Mammary epithelial cell (primary cell): ENCODE measurements at regions of chr2 and their contacts with region 1.

Region 1: GRCh38 chr2:176096986-176097819 is 2.4 kb upstream of the HOXD12 start:
- DNase-seq: peak; percentile 37
- H3K4me3 ChIP-seq: peak overlapping the region in 2 of 3 experiments; percentile 8 to 42
- H3K27ac ChIP-seq: no peak overlapping the region
- H3K4me1 ChIP-seq: peaks cover 8% of the 10 kb centered on the region
- H3K27me3 ChIP-seq: peaks cover 90% of the 10 kb centered on the region
- CTCF ChIP-seq: peak; percentile 72 to 90

Region 2: DNA sequence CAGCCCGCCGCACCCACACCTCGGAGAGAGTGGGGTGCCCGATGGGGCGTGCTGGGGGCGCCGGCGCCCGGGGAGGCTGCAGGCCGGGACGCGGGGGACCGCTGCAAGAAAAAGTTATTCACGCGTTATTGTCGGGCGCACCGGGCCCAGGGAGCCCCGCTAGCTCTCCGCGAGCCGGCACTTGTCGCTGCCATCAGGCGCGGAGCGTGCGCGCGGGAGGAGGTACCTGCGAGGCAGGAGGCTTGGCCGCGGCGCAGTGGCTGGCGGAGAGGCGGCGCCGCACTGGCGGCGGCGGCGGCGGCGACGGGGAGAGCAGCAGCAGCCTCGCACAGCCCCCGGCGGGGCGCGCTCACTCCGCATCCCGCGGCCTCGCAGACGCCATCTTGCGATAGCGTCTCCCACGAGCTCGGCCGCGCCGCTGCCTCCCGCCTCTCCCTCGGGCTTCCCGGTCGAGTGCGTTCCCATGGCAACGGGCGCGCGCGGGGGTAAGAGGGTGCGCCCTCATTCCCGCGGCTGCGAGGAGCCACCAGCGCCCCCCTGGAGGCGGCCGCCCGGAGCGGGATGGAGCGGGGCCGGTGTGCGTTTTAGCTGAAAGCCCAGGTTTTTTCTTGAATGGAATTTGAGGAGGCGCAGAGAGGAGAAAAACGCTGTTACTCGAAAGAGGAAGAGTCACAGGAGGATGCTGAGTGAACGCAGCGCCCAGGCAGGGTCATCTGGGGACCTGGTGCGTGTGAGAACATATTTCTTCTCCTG is 1092.0 kb before region 1 on chr2 and contains the start of gene CHN1:
- CTCF ChIA-PET with region 1: interaction called, 5 read pairs
- dilution Hi-C with region 1: no loop called
- in situ Hi-C with region 1: no loop called
- intact Hi-C with region 1: loop called (anchors 10 kb)
- DNase-seq: peak; percentile 59
- H3K4me3 ChIP-seq: peak within 1 kb of the TSS; percentile 64 to 77 (median 66)
- H3K27ac ChIP-seq: no peak within 1 kb of the TSS
- H3K4me1 ChIP-seq: peaks cover 4% of the 10 kb centered on the region
- H3K27me3 ChIP-seq: peaks cover 6% of the 10 kb centered on the region
- CTCF ChIP-seq: peak in 1 of 2 donors; percentile 3
- total RNA-seq, gene CHN1: 2.3 to 4.5 TPM

Region 3: GRCh38 chr2:175111200-175111657 is 986.0 kb before region 1 on chr2:
- CTCF ChIA-PET with region 1: no interaction called
- dilution Hi-C with region 1: no loop called
- in situ Hi-C with region 1: no loop called
- intact Hi-C with region 1: loop called (anchors 5 kb)
- DNase-seq: peak; percentile 34
- H3K4me3 ChIP-seq: no peak overlapping the region
- H3K27ac ChIP-seq: no peak overlapping the region
- H3K4me1 ChIP-seq: no peaks in the 10 kb centered on the region
- H3K27me3 ChIP-seq: no peaks in the 10 kb centered on the region
- CTCF ChIP-seq: peak; percentile 58 to 65

Region 4: DNA sequence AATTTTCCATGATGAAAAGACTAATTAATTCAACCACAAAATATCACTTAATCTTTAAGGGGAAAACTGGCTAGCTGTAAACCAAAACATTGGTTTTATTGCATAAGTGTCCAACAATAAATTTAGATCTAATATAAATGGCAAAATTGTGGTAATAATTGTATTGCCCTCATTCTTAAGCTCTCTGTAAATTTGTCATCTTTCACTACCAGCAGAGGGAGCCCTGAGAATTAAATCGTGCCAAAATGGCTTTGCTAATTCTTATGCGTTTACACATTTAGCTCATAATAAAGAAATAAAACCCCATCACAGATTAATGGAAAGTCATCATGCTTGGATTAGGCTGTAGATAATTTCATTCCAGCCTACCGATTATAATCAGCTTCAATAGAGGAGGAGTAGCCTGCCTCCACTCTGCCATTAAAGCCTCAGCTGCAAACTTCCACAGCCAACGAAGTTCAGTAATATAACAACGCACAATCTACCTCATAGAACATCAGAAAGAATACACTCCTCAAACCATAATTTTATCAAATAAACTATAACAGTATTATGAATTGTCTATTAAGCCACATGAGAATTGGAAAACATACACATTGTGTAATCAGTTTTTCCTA is 845.7 kb before region 1 on chr2:
- CTCF ChIA-PET with region 1: interaction called, 3 read pairs
- dilution Hi-C with region 1: no loop called
- in situ Hi-C with region 1: no loop called
- intact Hi-C with region 1: loop called (anchors 1 kb)
- DNase-seq: no peak
- H3K4me3 ChIP-seq: no peak overlapping the region
- H3K27ac ChIP-seq: no peak overlapping the region
- H3K4me1 ChIP-seq: no peaks in the 10 kb centered on the region
- H3K27me3 ChIP-seq: no peaks in the 10 kb centered on the region
- CTCF ChIP-seq: peak; percentile 62 to 73

Region 5: GRCh38 chr2:175366815-175367214 is 730.4 kb before region 1 on chr2:
- CTCF ChIA-PET with region 1: no interaction called
- dilution Hi-C with region 1: no loop called
- in situ Hi-C with region 1: loop called (anchors 10 to 25 kb)
- intact Hi-C with region 1: loop called (anchors 1 kb)
- DNase-seq: peak; percentile 24
- H3K4me3 ChIP-seq: no peak overlapping the region
- H3K27ac ChIP-seq: no peak overlapping the region
- H3K4me1 ChIP-seq: no peaks in the 10 kb centered on the region
- H3K27me3 ChIP-seq: peaks cover 7% of the 10 kb centered on the region
- CTCF ChIP-seq: peak; percentile 81 to 83

Region 6: DNA sequence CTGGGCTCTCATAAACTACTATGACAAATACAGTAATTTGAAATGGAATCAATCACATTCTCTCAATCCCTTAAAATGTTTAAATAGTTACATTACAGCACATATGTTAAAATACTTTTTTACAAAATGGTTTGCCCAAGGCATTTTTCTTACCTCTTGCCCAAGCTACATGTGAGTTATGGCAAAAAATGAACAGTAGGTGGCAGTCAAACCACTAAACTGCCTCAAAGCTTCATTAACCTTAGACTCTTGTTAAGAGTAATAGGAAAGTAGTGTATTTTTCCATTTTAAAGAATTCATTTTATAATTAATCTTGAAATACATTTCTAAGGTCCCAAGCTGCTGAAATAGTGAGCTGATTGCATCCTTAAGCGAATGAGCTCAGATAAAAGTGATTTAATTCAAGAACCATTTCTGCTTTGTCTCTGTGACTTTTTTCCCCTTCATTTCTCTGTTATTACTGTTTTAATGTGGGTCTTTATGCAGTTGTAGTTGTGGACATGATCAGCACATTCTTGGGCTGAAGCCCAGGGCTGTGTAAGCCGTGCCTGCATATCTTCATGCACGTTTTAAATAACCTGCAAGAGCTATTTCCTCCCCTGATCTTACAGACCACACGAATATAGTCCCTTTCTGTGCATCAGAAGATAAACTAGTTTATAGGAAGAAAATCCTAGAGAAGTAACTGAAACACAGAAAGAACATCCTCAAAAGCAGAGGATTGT is 406.9 kb before region 1 on chr2:
- CTCF ChIA-PET with region 1: interaction called, 8 read pairs
- dilution Hi-C with region 1: no loop called
- in situ Hi-C with region 1: loop called in 1 of 2 experiments (anchors 10 kb)
- intact Hi-C with region 1: loop called (anchors 2 kb)
- DNase-seq: peak; percentile 49
- H3K4me3 ChIP-seq: no peak overlapping the region
- H3K27ac ChIP-seq: no peak overlapping the region
- H3K4me1 ChIP-seq: no peaks in the 10 kb centered on the region
- H3K27me3 ChIP-seq: peaks cover 7% of the 10 kb centered on the region
- CTCF ChIP-seq: peak; percentile 69 to 78

Region 7: DNA sequence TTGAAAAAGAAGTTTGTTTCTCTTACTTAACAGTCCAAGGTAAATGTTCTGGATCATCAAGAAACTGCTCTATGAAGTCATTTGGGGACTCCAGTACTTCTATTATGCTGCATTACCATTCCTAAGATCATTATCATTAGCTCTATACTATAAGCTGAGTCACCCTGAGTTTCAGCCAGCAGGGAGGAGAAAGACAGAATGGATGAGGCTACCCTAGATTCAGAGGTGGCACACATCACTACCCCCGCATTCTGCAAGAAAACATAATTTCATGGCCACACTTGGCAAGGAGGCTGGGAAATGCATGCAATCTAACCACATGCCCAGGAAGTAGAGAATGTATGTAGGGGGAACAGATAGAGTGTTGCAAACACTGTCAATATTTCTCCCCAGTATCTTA is 78.5 kb before region 1 on chr2:
- CTCF ChIA-PET with region 1: no interaction called
- dilution Hi-C with region 1: no loop called
- in situ Hi-C with region 1: no loop called
- intact Hi-C with region 1: no loop called
- DNase-seq: peak; percentile 12
- H3K4me3 ChIP-seq: no peak overlapping the region
- H3K27ac ChIP-seq: no peak overlapping the region
- H3K4me1 ChIP-seq: no peaks in the 10 kb centered on the region
- H3K27me3 ChIP-seq: peaks cover 3% of the 10 kb centered on the region
- CTCF ChIP-seq: no peak

Region 8: DNA sequence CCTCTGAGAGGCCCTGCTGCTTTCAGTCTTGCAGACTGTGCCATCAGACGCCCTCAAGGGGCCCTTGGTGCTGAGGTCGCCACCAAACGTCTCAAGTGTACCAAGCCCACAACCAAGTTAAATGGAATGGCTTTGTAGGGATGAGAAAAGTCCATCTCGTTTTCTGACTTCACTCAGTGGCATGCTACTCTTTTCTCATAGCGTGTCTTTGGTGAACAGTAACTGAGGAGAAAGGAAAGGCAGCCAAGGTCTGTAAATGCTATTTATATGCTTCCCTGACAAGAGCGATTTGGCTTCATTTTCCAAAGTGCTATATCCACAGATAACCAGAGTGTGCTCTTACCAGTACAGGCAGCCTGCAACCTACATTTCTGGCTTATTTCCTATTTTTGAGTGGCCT is 295.0 kb after region 1 on chr2:
- CTCF ChIA-PET with region 1: no interaction called
- dilution Hi-C with region 1: no loop called
- in situ Hi-C with region 1: no loop called
- intact Hi-C with region 1: no loop called
- DNase-seq: no peak
- H3K4me3 ChIP-seq: no peak overlapping the region
- H3K27ac ChIP-seq: no peak overlapping the region
- H3K4me1 ChIP-seq: no peaks in the 10 kb centered on the region
- H3K27me3 ChIP-seq: peaks cover 1% of the 10 kb centered on the region
- CTCF ChIP-seq: no peak